ENCODE measurements at regions of chr14 and their contacts with region 1.

Region 1: DNA sequence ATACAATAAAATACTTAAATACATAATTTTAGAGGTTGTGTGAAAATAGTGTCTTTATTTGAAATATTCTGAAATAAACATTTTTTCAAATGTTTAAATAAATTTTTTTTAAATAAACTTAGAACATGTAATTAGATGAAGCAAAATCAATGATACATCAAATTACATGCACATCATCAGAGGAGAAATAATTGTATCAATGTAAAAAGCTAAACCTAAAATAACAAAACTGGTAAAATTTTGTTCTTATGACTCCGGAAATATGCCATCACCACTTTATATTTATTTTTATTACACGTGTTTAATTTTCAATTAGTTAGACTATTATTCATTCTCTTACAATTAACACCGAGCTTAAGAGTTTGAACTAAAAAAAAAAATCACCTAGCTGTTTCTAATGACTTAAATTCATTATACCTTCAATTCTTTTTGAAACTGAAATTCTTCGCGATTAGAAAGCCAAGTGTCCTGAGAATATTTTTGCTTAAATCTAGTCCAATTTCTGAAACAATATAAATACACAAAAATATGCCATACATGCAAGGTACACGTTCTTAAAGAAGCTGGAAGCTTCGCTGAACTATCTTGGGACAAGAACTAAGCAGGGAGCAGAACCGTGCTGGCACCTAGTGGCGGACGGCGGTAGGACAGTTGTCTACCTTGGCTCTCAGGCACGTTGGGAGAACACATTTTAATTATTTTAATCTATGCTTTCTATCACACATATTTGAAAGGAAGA is 230.5 kb downstream of the SLC25A21 start:
- DNase-seq: peak; percentile 71
- H3K4me3 ChIP-seq: 0 out of 2 replicates have a peak overlapping the region, but pooled peaks have one; percentile 7
- H3K27ac ChIP-seq: no peak overlapping the region
- H3K4me1 ChIP-seq: peaks cover 35% of the 10 kb centered on the region
- H3K27me3 ChIP-seq: no peaks in the 10 kb centered on the region

Region 2: GRCh38 chr14:36661756-36662498 is 280.0 kb before region 1 on chr14 and contains the start of gene PAX9:
- in situ Hi-C with region 1: loop called (anchors 25 kb)
- DNase-seq: peak; percentile 90
- H3K4me3 ChIP-seq: peak within 1 kb of the TSS; percentile 84
- H3K27ac ChIP-seq: no peak within 1 kb of the TSS
- H3K4me1 ChIP-seq: no peaks in the 10 kb centered on the region; the same call in 1 of the 2 replicates
- H3K27me3 ChIP-seq: peaks cover 59% of the 10 kb centered on the region
- total RNA-seq, gene PAX9: not detected in 2 replicates

Region 3: DNA sequence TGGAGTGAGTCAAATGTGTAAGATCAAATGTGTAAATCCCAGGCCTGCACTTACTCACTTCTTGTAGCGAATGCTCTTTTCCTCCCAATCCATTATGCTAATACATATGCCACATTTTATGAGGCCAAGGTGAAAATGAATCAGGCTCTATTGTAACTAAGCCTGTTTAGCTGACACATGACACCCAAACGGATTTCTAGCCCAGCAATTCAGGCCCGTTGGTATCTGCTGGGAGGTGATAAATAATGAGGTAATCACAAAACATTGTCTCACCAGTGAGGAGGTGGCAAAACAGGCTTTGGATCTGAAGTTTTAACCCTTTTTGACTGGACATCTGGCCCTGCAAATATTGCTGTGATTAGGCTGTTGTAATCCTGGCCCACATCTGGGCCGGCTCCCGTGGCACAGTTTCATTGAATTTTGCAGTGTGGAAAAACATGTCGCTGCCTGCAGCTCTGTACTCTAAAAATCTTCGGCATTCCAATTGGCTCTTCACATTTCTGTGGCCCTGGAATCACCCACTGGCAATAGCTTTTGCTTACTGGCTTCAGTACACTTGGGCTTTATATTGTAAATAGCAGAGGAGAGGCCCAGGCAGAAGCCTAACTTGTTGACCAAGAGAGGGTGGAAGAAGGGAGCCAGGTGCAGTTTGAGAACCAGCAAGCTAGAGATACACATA is 174.2 kb before region 1 on chr14:
- in situ Hi-C with region 1: no loop called
- DNase-seq: peak; percentile 50
- H3K4me3 ChIP-seq: no peak overlapping the region
- H3K27ac ChIP-seq: no peak overlapping the region
- H3K4me1 ChIP-seq: 0 out of 2 replicates have a peak, but pooled peaks cover 7% of the 10 kb centered on the region
- H3K27me3 ChIP-seq: no peaks in the 10 kb centered on the region

Region 4: GRCh38 chr14:38056270-38056669 is 1114.3 kb after region 1 on chr14:
- in situ Hi-C with region 1: no loop called
- DNase-seq: no peak
- H3K4me3 ChIP-seq: no peak overlapping the region
- H3K27ac ChIP-seq: no peak overlapping the region
- H3K4me1 ChIP-seq: no peaks in the 10 kb centered on the region
- H3K27me3 ChIP-seq: no peaks in the 10 kb centered on the region